Ovary (tissue), 10 donors: ENCODE measurements at regions of chr1 and their contacts with region 1.

Region 1: DNA sequence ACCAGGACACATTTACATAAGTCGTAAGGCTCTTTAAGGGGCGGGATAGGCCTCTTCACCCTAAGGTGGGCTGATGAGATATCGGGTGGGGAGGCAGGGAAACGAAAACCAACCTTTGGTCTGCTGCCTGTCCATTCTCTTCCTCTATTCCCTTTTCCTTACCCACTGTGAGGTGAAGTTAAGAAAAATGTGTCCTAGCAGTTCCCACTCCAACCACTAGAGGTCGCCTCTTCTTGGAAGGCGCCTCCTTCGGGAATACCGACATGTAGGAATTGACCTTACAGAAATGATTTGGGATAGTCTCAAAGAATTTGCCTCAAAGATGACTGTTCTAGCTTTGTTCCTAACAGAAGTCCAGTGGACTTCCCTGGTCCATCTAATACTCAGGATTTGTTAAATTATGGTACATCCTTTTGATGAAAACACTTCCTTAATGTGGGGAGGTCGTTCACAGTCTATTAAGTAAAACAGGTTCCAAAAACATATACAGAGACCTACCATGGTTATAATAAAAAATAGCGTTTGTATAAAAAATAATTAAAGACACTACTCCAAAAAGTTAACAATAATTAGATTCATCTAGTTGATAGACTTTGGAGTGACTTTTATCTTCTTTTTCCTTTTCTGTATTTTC is 14.1 kb downstream of the AZIN2 start:
- DNase-seq: peak in 4 of 5 donors; percentile 45 to 76 (median 61)
- H3K4me3 ChIP-seq: no peak overlapping the region
- H3K27ac ChIP-seq: no peak overlapping the region
- H3K4me1 ChIP-seq: peaks cover 2% of the 10 kb centered on the region
- H3K27me3 ChIP-seq: no peaks in the 10 kb centered on the region
- CTCF ChIP-seq: peak; percentile 72 to 88 (median 74)
- EP300 ChIP-seq: no peak
- POLR2A ChIP-seq: no peak

Region 2: DNA sequence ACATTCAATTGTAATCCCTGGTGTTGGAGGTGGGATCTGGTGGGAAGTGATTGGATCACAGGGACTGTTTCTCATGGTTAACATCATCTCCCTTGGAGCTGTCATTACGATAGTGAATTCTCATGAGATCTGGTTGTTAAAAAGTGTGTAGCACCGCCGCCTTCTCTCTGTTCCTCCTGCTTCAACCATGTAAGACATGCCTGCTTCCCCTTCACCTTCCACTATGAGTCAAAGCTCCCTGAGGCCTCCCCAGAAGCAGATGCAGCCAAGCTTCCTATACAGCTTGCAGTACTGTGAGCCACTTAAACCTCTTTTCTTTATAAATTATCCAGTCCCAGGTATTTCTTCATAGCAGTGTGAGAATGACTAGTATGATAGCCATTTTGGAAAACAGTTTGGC is 116.9 kb after region 1 on chr1:
- intact Hi-C with region 1: no loop called
- DNase-seq: no peak
- H3K4me3 ChIP-seq: no peak overlapping the region
- H3K27ac ChIP-seq: no peak overlapping the region
- H3K4me1 ChIP-seq: no peaks in the 10 kb centered on the region
- H3K27me3 ChIP-seq: no peaks in the 10 kb centered on the region
- CTCF ChIP-seq: no peak
- EP300 ChIP-seq: no peak
- POLR2A ChIP-seq: no peak

Region 3: DNA sequence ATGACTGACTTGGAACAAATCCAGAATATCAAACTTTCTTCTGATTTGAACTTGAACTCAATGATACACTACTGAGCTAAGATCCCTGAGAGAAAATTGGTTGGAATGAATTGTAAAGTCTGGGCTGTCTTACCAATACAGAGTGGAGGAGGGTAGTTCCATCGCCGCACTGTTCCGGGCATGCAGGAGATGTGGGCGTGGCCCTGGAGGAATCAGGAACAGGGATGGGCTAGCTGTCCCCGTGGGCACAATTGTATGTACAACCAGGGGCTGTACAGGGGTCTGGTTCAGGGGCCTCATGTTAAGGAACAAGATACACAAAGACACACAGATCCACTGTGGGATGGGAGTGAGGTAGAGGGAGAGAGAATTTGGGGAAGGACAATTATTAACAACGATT is 521.7 kb after region 1 on chr1:
- intact Hi-C with region 1: loop called in 2 of 4 experiments (anchors 10 kb)
- DNase-seq: no peak
- H3K4me3 ChIP-seq: no peak overlapping the region
- H3K27ac ChIP-seq: no peak overlapping the region
- H3K4me1 ChIP-seq: no peaks in the 10 kb centered on the region
- H3K27me3 ChIP-seq: no peaks in the 10 kb centered on the region
- CTCF ChIP-seq: no peak
- EP300 ChIP-seq: no peak
- POLR2A ChIP-seq: no peak